ENCODE measurements at regions of chr7 and their contacts with region 1.

Region 1: GRCh38 chr7:126657599-126658358 is 595.0 kb downstream of the GRM8 start:
- DNase-seq: peak; percentile 77
- ATAC-seq: peak; percentile 95
- H3K4me3 ChIP-seq: no peak overlapping the region
- H3K27ac ChIP-seq: peak overlapping the region; percentile 93
- H3K4me1 ChIP-seq: peaks cover 21% of the 10 kb centered on the region
- H3K27me3 ChIP-seq: no peaks in the 10 kb centered on the region
- CTCF ChIP-seq: no peak
- EP300 ChIP-seq: peak; percentile 65 to 90; a peak in 2 of 4 replicates
- POLR2A ChIP-seq: no peak
- RAD21 ChIP-seq: no peak; the same call in 1 of the 2 replicates

Region 2: DNA sequence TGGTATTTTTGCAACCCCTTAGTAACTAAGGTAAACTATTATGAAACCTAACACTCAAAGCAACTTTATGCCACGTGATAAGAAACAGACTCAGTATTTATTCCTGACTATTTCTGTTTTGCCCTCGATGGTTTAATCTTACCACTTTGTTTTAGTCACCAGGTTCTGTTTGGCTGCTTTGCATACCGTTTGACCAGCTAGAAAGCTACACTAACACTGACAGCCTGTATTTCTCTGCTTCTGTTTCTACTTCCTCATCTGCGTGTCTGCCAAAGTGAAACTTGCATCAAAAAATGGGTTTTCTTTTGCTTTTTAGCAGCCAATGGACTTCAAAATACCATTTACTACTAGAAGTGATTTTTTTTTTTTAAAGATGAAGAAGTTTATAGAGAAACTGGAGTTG is 207.5 kb before region 1 on chr7:
- CTCF ChIA-PET with region 1: no interaction called
- POLR2A ChIA-PET with region 1: interaction called, 10 read pairs
- RAD21 ChIA-PET with region 1: interaction called, 35 read pairs
- SMC1A ChIA-PET with region 1: interaction called, 30 read pairs
- in situ Hi-C with region 1: no loop called
- intact Hi-C with region 1: loop called (anchors 2 kb)
- DNase-seq: peak; percentile 75
- ATAC-seq: peak; percentile 96
- H3K4me3 ChIP-seq: peak overlapping the region; percentile 23; the same call in 1 of the 2 replicates
- H3K27ac ChIP-seq: peak overlapping the region; percentile 89
- H3K4me1 ChIP-seq: peaks cover 28% of the 10 kb centered on the region
- H3K27me3 ChIP-seq: no peaks in the 10 kb centered on the region
- CTCF ChIP-seq: no peak
- EP300 ChIP-seq: peak in 1 of 2 experiments; percentile 72; a peak in 2 of 4 replicates
- POLR2A ChIP-seq: no peak
- RAD21 ChIP-seq: no peak

Region 3: GRCh38 chr7:126569402-126569801 is 88.4 kb before region 1 on chr7:
- CTCF ChIA-PET with region 1: interaction called, 3 read pairs
- POLR2A ChIA-PET with region 1: interaction called, 3 read pairs
- RAD21 ChIA-PET with region 1: interaction called, 13 read pairs
- SMC1A ChIA-PET with region 1: interaction called, 18 read pairs
- in situ Hi-C with region 1: no loop called
- intact Hi-C with region 1: no loop called
- DNase-seq: peak; percentile 23
- ATAC-seq: peak; percentile 66
- H3K4me3 ChIP-seq: no peak overlapping the region
- H3K27ac ChIP-seq: no peak overlapping the region; the same call in 1 of the 2 replicates
- H3K4me1 ChIP-seq: peaks cover 11% of the 10 kb centered on the region
- H3K27me3 ChIP-seq: no peaks in the 10 kb centered on the region
- CTCF ChIP-seq: no peak
- EP300 ChIP-seq: no peak
- POLR2A ChIP-seq: no peak
- RAD21 ChIP-seq: no peak

Region 4: DNA sequence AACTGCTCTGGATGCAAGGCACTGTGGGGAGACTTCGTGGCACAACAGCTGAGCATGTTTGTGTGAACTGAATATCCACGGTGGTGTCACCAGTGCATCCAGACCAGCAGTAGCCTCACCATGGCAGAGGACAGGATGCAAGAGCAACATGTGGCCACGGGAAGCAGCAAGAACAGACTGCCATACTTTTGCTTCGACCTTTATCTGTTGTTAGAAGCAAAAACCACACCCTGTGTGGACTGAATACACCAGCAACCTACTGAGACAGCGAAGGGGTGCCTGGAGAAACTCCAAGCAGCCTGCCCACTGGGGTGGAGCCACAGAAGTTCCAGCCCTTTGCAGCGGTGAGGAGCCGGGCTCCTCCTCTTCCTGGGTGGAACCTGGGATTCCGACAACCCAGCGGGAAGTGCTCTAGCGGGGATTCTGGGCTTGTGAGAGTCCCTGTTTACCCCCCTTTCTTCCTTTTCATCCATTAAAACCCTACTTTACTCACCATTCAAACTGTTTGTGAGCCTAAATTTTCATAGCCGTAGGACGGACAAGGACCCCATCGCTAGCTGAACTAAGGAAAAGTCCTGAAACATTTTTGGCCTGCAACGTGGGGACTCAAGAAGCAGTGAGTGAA is 10.1 kb after region 1 on chr7:
- CTCF ChIA-PET with region 1: interaction called, 4 read pairs
- POLR2A ChIA-PET with region 1: interaction called, 3 read pairs
- RAD21 ChIA-PET with region 1: interaction called, 3 read pairs
- SMC1A ChIA-PET with region 1: interaction called, 12 read pairs
- in situ Hi-C with region 1: no loop called
- intact Hi-C with region 1: no loop called
- DNase-seq: no peak
- ATAC-seq: no peak
- H3K4me3 ChIP-seq: no peak overlapping the region
- H3K27ac ChIP-seq: no peak overlapping the region
- H3K4me1 ChIP-seq: no peaks in the 10 kb centered on the region
- H3K27me3 ChIP-seq: no peaks in the 10 kb centered on the region
- CTCF ChIP-seq: no peak
- EP300 ChIP-seq: no peak
- POLR2A ChIP-seq: no peak
- RAD21 ChIP-seq: no peak

Region 5: GRCh38 chr7:126720232-126720631 is 62.5 kb after region 1 on chr7:
- CTCF ChIA-PET with region 1: interaction called, 7 read pairs
- POLR2A ChIA-PET with region 1: interaction called, 21 read pairs
- RAD21 ChIA-PET with region 1: interaction called, 29 read pairs
- SMC1A ChIA-PET with region 1: interaction called, 26 read pairs
- in situ Hi-C with region 1: no loop called
- intact Hi-C with region 1: no loop called
- DNase-seq: no peak
- ATAC-seq: peak; percentile 91
- H3K4me3 ChIP-seq: no peak overlapping the region
- H3K27ac ChIP-seq: peak overlapping the region; percentile 46; the same call in 1 of the 2 replicates
- H3K4me1 ChIP-seq: peaks cover 11% of the 10 kb centered on the region
- H3K27me3 ChIP-seq: no peaks in the 10 kb centered on the region
- CTCF ChIP-seq: no peak
- EP300 ChIP-seq: peak; percentile 29 to 54; a peak in 2 of 4 replicates
- POLR2A ChIP-seq: no peak
- RAD21 ChIP-seq: no peak